ENCODE measurements at regions of chr7 and their contacts with region 1.

Region 1: GRCh38 chr7:16891338-16891737 is 9.6 kb upstream of the AGR3 start:
- DNase-seq: peak; percentile 63
- ATAC-seq: peak; percentile 94
- H3K4me3 ChIP-seq: no peak overlapping the region
- H3K27ac ChIP-seq: no peak overlapping the region
- H3K4me1 ChIP-seq: no peaks in the 10 kb centered on the region
- H3K27me3 ChIP-seq: no peaks in the 10 kb centered on the region
- CTCF ChIP-seq: peak; percentile 84
- EP300 ChIP-seq: no peak
- POLR2A ChIP-seq: no peak
- RAD21 ChIP-seq: peak; percentile 80

Region 2: DNA sequence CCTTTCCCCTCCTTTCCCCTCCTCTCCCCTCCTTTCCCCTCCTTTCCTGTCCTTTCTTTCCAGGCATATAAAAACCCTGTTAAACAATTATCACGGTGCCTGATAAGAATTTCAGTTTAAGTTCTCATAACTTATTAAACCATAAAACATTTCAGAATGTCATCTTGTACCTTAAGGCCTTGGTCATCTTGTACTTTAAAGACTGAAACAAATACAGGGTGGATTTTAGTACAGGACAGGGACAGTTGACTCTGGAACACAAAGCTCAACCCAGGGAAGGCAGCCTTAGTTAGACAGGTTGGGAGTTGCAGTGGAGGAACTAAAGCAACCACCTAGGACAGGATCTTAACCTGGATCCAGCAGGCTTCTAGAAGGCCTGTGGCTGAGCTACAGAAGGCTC is 10.8 kb before region 1 on chr7:
- CTCF ChIA-PET with region 1: no interaction called
- POLR2A ChIA-PET with region 1: no interaction called
- in situ Hi-C with region 1: no loop called
- intact Hi-C with region 1: no loop called
- DNase-seq: no peak
- ATAC-seq: no peak
- H3K4me3 ChIP-seq: no peak overlapping the region
- H3K27ac ChIP-seq: no peak overlapping the region
- H3K4me1 ChIP-seq: no peaks in the 10 kb centered on the region
- H3K27me3 ChIP-seq: no peaks in the 10 kb centered on the region
- CTCF ChIP-seq: no peak
- EP300 ChIP-seq: no peak
- POLR2A ChIP-seq: no peak
- RAD21 ChIP-seq: no peak

Region 3: DNA sequence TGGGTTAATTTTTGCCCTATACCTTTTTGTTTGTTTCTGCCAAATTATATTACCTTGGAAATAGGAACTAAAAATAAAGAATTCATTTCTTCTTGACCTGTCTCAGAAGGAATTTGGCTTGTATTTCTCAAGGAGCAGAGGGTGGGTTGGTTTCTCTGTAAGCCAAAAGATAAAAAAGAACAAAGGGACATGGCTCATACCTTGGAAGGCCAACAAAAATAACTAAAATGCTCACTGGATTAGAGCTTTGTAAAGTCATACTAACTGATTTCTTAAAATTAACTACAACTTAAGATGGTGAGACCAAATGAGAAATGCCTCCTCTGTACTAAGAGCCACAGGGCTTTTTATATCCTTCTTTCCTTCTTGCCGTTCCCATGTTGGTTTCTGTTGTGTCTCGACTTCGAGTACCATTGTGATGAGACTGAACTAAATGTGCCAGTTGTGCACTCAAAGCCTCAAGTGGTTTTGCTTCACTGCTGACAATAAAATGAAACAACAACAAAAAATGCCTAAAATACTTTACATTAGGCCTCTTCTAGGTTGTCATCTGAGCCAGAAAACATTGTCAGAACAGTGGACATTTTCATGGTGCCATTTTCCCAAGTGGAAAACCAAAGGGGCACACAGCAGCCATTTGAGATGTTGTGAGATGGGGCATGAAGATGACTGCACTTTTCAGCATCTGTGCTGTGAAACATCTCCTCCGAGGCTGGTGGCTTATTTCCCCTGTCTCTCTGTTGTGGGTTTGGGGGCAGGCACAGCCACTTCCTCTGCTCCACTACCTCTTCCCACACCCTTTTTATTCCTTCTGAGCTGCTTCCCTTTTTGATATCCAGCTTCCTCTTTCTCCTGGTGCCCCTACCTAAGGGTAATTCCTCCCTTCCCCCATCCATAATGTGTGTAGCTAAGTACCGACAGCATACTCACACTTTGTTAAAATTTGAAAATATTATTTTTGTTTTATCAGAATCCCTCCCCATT is 42.2 kb after region 1 on chr7:
- CTCF ChIA-PET with region 1: no interaction called
- POLR2A ChIA-PET with region 1: no interaction called
- in situ Hi-C with region 1: no loop called
- intact Hi-C with region 1: no loop called
- DNase-seq: no peak
- ATAC-seq: no peak
- H3K4me3 ChIP-seq: no peak overlapping the region
- H3K27ac ChIP-seq: no peak overlapping the region
- H3K4me1 ChIP-seq: 0 out of 2 replicates have a peak, but pooled peaks cover 1% of the 10 kb centered on the region
- H3K27me3 ChIP-seq: no peaks in the 10 kb centered on the region; a peak in 1 of 5 replicates
- CTCF ChIP-seq: no peak
- EP300 ChIP-seq: no peak
- POLR2A ChIP-seq: no peak
- RAD21 ChIP-seq: no peak

Region 4: GRCh38 chr7:18345641-18346234 is 1454.4 kb after region 1 on chr7:
- CTCF ChIA-PET with region 1: no interaction called
- POLR2A ChIA-PET with region 1: no interaction called
- in situ Hi-C with region 1: no loop called
- intact Hi-C with region 1: loop called (anchors 5 kb)
- DNase-seq: peak; percentile 35
- ATAC-seq: peak; percentile 73
- H3K4me3 ChIP-seq: no peak overlapping the region
- H3K27ac ChIP-seq: no peak overlapping the region
- H3K4me1 ChIP-seq: no peaks in the 10 kb centered on the region
- H3K27me3 ChIP-seq: no peaks in the 10 kb centered on the region
- CTCF ChIP-seq: peak; percentile 70
- EP300 ChIP-seq: no peak
- POLR2A ChIP-seq: no peak
- RAD21 ChIP-seq: peak; percentile 22; the same call in 1 of the 2 replicates